ENCODE measurements at regions of chr11 and their contacts with region 1.

Region 1: DNA sequence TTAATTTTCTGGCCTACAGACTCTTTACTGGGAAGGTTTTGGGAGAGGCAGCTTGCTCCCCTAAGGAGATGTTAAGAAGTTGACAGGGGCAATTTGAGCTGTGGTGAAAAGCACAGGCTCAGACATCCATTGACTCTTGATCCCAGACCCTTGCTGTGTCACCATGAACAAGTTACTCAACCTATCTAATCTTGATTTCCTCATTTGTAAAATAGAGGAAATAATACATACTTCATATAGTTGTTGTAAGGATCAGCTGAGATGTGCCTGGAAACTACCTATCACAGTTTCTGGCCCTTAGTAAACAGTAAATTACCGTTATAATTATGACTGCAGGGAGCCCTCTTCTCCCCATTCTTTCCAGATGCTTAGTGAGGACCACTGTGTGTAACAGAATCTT is 16.6 kb upstream of the SCGB1D4 start:
- DNase-seq: no peak
- H3K4me3 Mint-ChIP-seq: no peak overlapping the region
- H3K27ac Mint-ChIP-seq: no peak overlapping the region
- H3K4me1 Mint-ChIP-seq: no peaks in the 10 kb centered on the region
- H3K27me3 Mint-ChIP-seq: peaks cover 88% of the 10 kb centered on the region
- CTCF ChIP-seq: no peak

Region 2: GRCh38 chr11:62169091-62169847 is 146.2 kb before region 1 on chr11:
- CTCF ChIA-PET with region 1: interaction called, 13 read pairs
- POLR2A ChIA-PET with region 1: no interaction called
- intact Hi-C with region 1: loop called (anchors 1 kb)
- DNase-seq: no peak
- H3K4me3 Mint-ChIP-seq: no peak overlapping the region
- H3K27ac Mint-ChIP-seq: no peak overlapping the region
- H3K4me1 Mint-ChIP-seq: no peaks in the 10 kb centered on the region
- H3K27me3 Mint-ChIP-seq: peaks cover 89% of the 10 kb centered on the region
- CTCF ChIP-seq: no peak

Region 3: DNA sequence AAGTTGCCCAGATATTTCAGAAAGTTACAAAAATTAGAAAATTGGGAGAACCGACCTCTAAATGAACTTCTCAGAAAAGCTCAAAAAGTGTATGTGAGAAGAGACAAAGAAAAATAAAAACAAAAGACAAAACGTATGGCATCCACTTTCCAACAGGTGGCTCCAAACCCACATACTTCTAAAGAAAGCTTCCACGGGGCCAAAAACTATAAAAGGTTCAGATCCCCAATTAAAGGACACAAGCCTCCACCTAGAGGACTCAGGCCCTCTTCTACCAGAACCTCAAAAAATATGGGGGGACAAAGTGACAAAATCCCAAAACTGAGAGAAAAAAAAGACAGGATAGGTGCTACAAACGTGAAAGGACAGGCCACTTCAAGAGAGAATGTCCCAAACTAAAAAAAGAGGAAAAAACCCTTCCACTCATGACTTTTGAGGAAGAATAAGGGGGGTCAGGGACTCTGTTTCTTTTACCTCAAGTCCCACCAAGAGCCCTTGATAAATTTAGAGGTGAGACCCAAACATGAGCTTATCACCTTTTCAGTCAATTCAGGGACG is 98.2 kb before region 1 on chr11:
- CTCF ChIA-PET with region 1: interaction called, 17 read pairs
- POLR2A ChIA-PET with region 1: no interaction called
- intact Hi-C with region 1: loop called (anchors 1 kb)
- DNase-seq: peak; percentile 39
- H3K4me3 Mint-ChIP-seq: no peak overlapping the region
- H3K27ac Mint-ChIP-seq: no peak overlapping the region
- H3K4me1 Mint-ChIP-seq: no peaks in the 10 kb centered on the region
- H3K27me3 Mint-ChIP-seq: no peaks in the 10 kb centered on the region
- CTCF ChIP-seq: peak; percentile 36

Region 4: GRCh38 chr11:62233730-62234129 is 81.7 kb before region 1 on chr11:
- CTCF ChIA-PET with region 1: interaction called, 44 read pairs
- POLR2A ChIA-PET with region 1: no interaction called
- intact Hi-C with region 1: loop called (anchors 1 kb)
- DNase-seq: peak; percentile 7
- H3K4me3 Mint-ChIP-seq: no peak overlapping the region
- H3K27ac Mint-ChIP-seq: no peak overlapping the region
- H3K4me1 Mint-ChIP-seq: no peaks in the 10 kb centered on the region
- H3K27me3 Mint-ChIP-seq: peaks cover 58% of the 10 kb centered on the region
- CTCF ChIP-seq: peak; percentile 10

Region 5: DNA sequence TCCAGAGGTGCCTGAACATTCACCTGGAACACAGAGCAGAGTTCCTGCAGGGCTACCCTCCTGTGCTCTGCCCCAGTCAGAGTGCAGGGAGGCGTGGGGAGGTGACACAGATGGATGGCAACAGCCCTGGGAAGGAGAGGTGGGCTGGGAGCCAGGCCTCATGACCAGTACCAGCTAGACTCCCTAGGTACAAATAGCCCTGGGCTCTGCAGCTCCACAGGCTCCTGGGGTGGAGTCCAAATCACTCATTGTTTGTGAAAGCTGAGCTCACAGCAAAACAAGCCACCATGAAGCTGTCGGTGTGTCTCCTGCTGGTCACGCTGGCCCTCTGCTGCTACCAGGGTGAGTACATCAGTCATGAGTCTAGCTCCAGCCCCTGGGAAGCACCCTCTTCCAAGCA is 73.4 kb before region 1 on chr11 and contains the start of gene SCGB1D2:
- CTCF ChIA-PET with region 1: interaction called, 23 read pairs
- POLR2A ChIA-PET with region 1: no interaction called
- intact Hi-C with region 1: no loop called
- DNase-seq: peak; percentile 74
- H3K4me3 Mint-ChIP-seq: no peak within 1 kb of the TSS
- H3K27ac Mint-ChIP-seq: no peak within 1 kb of the TSS
- H3K4me1 Mint-ChIP-seq: no peaks in the 10 kb centered on the region
- H3K27me3 Mint-ChIP-seq: peaks cover 60% of the 10 kb centered on the region
- CTCF ChIP-seq: no peak
- total RNA-seq, gene SCGB1D2: not detected in 2 replicates

Region 6: GRCh38 chr11:62280452-62280851 is 35.0 kb before region 1 on chr11:
- CTCF ChIA-PET with region 1: no interaction called
- POLR2A ChIA-PET with region 1: no interaction called
- intact Hi-C with region 1: no loop called
- DNase-seq: no peak
- H3K4me3 Mint-ChIP-seq: no peak overlapping the region
- H3K27ac Mint-ChIP-seq: no peak overlapping the region
- H3K4me1 Mint-ChIP-seq: peaks cover 1% of the 10 kb centered on the region
- H3K27me3 Mint-ChIP-seq: peaks cover 12% of the 10 kb centered on the region
- CTCF ChIP-seq: no peak